ENCODE measurements at regions of chr1 and their contacts with region 1.

Region 1: DNA sequence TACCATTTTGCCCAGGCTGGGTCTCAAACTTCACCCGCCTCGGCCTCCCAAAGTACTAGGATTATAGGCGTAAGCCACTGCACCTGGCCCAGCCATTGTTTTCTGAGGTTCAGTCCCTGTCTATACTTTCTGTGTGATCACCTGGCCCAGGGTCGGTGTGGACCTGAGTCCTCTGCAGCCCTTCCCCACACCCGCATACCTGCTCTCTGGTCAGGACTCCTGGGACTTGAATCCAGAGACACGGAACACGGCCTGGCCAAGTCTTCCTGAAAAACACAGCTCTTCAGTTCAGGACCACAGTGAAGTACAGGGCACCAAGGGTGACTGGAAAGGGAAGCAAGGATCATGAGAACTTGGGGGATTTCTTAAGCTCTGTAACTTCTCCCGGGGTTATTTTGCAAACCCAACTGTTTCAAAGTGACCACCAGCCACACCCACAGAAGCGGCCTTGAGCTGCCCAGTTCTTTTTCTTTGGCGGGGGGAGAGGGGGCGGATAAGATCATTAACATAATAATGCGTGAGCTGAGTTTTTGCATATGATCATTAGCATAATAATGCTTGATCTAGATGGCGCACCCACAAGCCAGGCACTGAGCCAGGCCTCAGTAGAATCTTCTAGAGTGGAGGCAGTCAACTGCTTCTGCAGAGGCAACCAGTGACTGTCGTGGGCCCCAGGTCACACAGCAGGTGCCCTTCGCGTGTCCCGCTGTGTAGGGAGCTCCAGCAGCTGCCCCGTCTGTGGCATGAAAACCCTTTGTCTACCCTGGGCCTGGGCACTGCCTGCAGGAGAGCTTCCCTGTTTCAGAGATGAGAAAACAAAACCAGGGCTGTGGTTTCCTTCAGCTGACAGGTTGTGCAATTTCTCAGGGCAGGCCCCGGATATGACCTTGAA is 1.7 kb upstream of the NADK start:
- DNase-seq: peak; percentile 62
- H3K4me3 Mint-ChIP-seq: peak overlapping the region; percentile 74
- H3K27ac Mint-ChIP-seq: peak overlapping the region; percentile 83
- H3K4me1 Mint-ChIP-seq: peaks cover 46% of the 10 kb centered on the region
- H3K27me3 Mint-ChIP-seq: no peaks in the 10 kb centered on the region

Region 2: DNA sequence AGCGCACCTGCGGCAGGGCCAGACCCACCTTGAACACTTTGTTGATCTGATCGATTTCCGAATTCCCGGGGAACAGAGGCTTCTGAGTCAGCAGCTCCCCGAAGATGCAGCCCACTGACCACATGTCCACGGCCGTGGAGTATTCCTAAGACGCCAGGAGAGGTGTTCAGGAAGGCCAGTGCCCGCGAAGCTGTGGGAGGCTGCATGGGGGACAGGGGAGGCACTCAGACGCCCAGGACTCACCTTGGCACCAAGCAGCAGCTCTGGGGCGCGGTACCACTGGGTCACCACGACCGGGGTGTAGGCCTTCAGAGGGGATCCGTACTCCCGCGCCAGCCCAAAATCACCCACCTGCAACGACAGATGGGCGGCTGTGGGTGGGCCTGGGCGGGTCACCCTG is 76.2 kb before region 1 on chr1:
- intact Hi-C with region 1: no loop called
- DNase-seq: no peak
- H3K4me3 Mint-ChIP-seq: no peak overlapping the region
- H3K27ac Mint-ChIP-seq: no peak overlapping the region
- H3K4me1 Mint-ChIP-seq: no peaks in the 10 kb centered on the region
- H3K27me3 Mint-ChIP-seq: no peaks in the 10 kb centered on the region

Region 3: DNA sequence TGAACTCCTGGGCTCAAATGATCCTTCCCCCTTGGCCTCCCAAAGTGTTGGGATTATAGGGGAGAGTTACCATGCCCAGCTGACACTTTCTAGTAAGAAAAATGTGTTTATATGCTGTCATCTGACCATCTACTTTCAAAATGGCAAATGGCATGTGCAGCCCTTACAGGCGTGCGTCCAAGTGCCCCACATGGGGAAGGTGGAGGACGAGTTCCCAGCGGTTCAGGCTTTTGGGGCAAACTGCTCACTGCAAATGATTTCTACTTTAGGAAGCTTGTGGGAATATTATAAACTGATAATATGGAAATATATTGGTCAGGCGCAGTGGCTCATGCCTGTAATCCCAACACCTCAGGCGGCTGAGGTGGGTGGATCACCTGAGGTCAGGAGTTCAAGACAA is 39.8 kb after region 1 on chr1:
- intact Hi-C with region 1: loop called (anchors 5 kb)
- DNase-seq: no peak
- H3K4me3 Mint-ChIP-seq: no peak overlapping the region
- H3K27ac Mint-ChIP-seq: no peak overlapping the region
- H3K4me1 Mint-ChIP-seq: peaks cover 9% of the 10 kb centered on the region
- H3K27me3 Mint-ChIP-seq: no peaks in the 10 kb centered on the region

Region 4: DNA sequence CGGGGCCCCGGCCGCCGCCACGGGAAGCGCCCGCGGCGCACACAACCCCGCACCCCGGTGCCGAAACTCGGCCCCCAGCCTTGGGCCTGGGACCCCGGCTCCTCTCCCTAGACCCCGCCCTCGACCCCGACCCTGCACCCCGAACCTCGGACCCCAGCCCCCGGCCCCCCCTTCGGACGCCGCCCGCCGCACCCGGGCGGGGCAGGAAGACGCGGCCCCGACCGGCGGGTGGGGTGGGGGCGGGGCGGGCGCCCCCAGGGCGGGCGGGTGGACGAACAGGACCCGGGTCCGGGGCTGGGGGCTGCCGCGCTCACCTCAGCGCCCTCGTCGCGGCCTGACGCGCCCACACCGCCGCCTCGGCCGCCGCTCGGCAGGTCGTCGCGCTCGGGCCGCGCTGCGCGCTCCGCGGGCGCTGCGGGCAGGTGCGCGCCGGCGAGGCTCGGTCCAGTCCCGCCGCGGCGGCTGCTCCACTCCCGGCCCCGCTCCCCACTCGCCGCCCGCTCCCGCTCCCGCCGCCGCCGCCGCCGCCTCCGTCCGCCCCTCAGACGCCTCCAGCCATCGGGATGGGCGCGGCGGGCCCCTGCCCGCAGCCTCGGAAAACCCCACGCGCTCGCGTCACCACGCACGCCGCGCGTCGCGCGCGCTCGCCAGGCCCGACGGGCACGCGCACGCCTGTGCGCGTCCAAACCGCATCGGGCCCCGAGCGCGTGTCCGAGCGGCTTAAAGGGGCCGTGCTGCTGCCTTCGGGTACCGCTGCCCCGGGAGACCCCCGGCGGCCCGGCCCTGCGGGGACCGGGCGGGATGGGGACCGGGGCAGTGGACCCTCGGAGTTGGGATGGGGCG is 110.8 kb after region 1 on chr1 and contains the start of gene GNB1:
- intact Hi-C with region 1: loop called (anchors 5 kb)
- DNase-seq: peak; percentile 87
- H3K4me3 Mint-ChIP-seq: peak within 1 kb of the TSS; percentile 78
- H3K27ac Mint-ChIP-seq: peak within 1 kb of the TSS; percentile 84
- H3K4me1 Mint-ChIP-seq: peaks cover 37% of the 10 kb centered on the region
- H3K27me3 Mint-ChIP-seq: no peaks in the 10 kb centered on the region
- total RNA-seq, gene GNB1: 452 and 471 TPM in 2 replicates

Region 5: DNA sequence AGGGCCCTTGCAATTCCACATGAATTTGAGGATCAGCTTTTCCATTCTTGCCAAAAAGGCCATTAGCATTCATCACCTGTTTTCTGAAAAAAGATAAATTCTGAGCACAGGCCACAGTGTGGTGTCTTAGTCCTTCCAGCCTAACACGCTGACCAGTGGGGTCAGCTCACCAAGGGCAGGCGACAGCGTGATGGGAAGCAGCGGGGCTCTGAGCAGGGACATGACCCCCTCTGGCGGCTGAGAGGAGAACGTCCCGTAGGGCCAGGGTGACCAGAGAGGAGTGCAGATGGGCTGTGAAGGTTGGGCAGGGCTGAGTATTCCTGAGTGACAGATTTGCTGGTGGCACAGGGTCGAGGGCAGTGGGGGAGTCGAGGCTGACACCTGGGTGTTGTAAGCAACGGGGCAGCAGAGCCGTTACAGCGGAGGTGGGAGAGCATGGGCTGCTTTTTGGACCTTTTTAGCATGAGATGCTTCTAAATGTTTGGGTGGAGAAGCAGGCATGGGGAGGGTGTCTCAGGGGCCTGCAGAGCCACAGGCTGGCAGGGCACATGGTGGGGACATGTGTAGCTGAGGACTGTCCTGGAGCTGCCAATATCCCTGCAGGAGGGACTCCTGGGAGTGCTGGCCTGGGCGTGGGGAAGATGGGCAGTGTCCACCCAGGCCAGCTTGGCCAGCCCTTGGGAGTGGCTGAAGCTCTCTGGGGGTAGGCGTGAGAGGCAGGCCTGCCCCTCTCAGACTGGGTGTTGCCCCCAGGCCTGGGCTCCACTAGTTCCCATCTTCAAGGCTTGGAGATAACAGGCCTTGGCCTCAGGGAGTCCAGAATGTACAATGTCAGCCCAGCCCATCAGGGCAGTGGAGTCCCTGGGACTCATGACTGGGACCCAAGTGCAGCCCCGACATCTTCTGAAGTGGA is 126.5 kb after region 1 on chr1:
- intact Hi-C with region 1: loop called (anchors 5 kb)
- DNase-seq: peak; percentile 67
- H3K4me3 Mint-ChIP-seq: peak overlapping the region; percentile 55
- H3K27ac Mint-ChIP-seq: peak overlapping the region; percentile 43
- H3K4me1 Mint-ChIP-seq: peaks cover 7% of the 10 kb centered on the region
- H3K27me3 Mint-ChIP-seq: no peaks in the 10 kb centered on the region

Measured in activated T-helper 2 cell treated with anti-CD3 and anti-CD28 coated beads, Interferon-gamma antibody, Interleukin-2, Interleukin-4, amounts not matched to agents 10 μg/mL and 5 μg/mL and 100 μg/mL, durations not matched to agents 14 hours and 24 hours and 36 hours (primary cell).